ENCODE measurements at regions of chr5 and their contacts with region 1.

Region 1: DNA sequence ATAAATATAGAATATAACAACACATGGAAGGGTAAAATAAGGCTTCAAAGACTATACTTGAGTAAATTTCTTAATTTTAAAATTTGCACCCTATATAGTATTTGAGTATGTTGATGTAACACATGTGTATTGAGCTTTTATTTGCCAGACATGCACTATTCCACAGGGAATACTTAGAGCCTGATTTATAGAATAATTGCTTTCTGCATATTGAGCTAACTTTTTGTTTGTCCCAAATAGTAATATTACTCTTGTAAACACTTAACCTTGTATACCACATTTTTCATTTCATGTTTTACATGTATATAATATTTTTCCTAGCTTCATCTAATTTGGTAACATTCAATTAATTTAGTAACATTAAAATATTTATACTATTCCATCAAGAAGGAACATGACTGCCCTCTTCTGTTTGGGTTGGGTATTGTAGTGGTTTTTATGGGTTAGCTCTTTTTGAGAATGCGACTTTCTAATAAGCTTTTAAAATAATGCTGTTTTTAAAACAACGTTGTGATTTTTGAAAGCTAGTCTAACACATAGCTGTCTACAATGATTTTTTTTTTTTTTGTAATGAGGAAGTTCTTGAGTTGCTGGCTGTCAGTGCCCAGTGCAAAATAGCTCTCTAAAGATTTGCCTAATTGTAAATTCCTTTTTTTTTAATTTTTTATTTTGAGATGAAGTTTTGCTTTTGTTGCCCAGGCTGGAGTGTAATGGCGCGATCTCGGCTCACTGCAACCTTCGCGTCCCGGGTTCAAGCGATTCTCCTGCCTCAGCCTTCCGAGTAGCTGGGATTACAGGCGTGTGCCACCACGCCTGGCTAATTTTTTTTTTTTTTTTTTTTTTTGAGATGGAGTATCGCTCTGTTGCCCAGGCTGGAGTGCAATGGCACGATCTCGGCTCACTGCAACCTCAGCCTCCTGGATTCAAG is 4.8 kb downstream of the SUB1 start:
- DNase-seq: no peak
- CTCF ChIP-seq: peak; percentile 55

Region 2: GRCh38 chr5:32489791-32490582 is 100.2 kb before region 1 on chr5:
- in situ Hi-C with region 1: loop called (anchors 10 kb)
- DNase-seq: peak; percentile 62
- CTCF ChIP-seq: peak; percentile 71